Activated CD4-positive, alpha-beta T cell treated with anti-CD3 and anti-CD28 coated beads for 36 hours (primary cell): ENCODE measurements at regions of chr1 and their contacts with region 1.

Region 1: GRCh38 chr1:118479374-118479773 is 294.3 kb upstream of the SPAG17 start:
- DNase-seq: no peak
- ATAC-seq: no peak
- H3K4me3 Mint-ChIP-seq: no peak overlapping the region
- H3K27ac Mint-ChIP-seq: no peak overlapping the region
- H3K4me1 Mint-ChIP-seq: no peaks in the 10 kb centered on the region
- H3K27me3 Mint-ChIP-seq: no peaks in the 10 kb centered on the region

Region 2: DNA sequence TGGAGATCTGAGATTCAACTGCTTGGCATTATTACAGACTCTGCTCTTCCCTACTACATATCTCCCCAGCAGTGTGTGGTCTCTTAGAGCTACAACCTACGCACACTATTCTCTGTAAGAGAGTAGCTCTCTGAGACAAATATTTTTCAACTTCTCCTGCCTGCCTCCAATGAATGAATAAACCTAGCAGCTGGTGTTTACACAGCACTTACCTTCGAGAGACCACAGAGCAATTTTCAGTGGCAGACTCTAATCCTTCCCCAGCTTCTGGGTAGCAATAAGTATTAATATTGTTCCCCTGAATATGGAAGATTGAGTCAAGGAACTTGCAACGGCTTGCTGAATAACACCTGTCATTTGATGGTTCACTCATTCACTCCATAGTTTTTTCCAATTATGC is 56.5 kb after region 1 on chr1:
- CTCF ChIA-PET with region 1: no interaction called
- POLR2A ChIA-PET with region 1: no interaction called
- intact Hi-C with region 1: loop called in 1 of 2 experiments (anchors 10 kb)
- DNase-seq: no peak
- ATAC-seq: no peak
- H3K4me3 Mint-ChIP-seq: no peak overlapping the region
- H3K27ac Mint-ChIP-seq: no peak overlapping the region
- H3K4me1 Mint-ChIP-seq: no peaks in the 10 kb centered on the region
- H3K27me3 Mint-ChIP-seq: no peaks in the 10 kb centered on the region